Activated CD8-positive, alpha-beta T cell treated with anti-CD3 and anti-CD28 coated beads for 36 hours (primary cell): ENCODE measurements at regions of chr1 and their contacts with region 1.

Region 1: GRCh38 chr1:11907275-11908094 is 18.7 kb downstream of the KIAA2013 start:
- DNase-seq: peak; percentile 94
- ATAC-seq: peak; percentile 65
- H3K4me3 Mint-ChIP-seq: peak overlapping the region; percentile 90
- H3K27ac Mint-ChIP-seq: peak overlapping the region; percentile 96
- H3K4me1 Mint-ChIP-seq: peaks cover 29% of the 10 kb centered on the region
- H3K27me3 Mint-ChIP-seq: peaks cover 14% of the 10 kb centered on the region
- CTCF ChIP-seq: peak; percentile 65

Region 2: DNA sequence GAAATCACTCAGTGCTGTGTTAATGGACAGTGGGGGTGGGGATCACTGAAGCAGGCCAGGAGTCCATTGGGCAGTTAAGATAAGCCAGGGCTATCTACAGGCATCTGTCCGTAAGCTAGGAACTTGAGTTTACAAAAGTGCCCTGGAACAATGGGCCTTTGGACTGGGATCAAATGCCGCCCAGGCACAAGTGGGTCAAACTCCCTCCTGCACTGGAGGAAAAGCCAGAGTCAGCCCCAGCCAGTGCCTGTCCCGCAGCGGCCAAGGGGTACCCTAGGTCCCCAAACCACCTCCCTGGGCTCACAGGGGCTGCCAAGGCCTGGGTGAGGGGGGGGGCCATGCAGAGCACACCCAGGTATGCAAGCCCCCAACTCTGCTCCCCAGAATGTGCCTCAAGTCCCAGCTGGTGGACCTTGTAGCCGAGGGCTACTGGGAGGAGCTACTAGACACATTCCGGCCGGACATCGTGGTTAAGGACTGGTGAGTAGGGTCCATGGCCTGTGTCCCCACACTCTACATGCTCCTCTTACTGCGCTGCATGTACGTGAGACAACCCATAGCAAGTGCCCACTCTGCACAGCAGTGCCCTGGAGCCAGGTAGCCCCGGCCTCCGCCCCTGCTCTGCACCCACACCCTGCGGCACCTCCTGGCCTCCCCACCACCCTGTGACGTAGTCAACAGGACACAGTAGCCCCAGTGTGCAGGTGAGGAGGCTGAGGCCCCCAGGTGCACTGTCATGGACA is 235.8 kb before region 1 on chr1:
- CTCF ChIA-PET with region 1: no interaction called
- POLR2A ChIA-PET with region 1: interaction called, 32 read pairs
- intact Hi-C with region 1: no loop called
- DNase-seq: no peak
- ATAC-seq: no peak
- H3K4me3 Mint-ChIP-seq: no peak overlapping the region
- H3K27ac Mint-ChIP-seq: no peak overlapping the region
- H3K4me1 Mint-ChIP-seq: no peaks in the 10 kb centered on the region
- H3K27me3 Mint-ChIP-seq: no peaks in the 10 kb centered on the region
- CTCF ChIP-seq: no peak

Region 3: GRCh38 chr1:11805447-11806306 is 101.8 kb before region 1 on chr1 and contains the starts of genes CLCN6 and MTHFR:
- CTCF ChIA-PET with region 1: interaction called, 5 read pairs
- POLR2A ChIA-PET with region 1: interaction called, 123 read pairs
- intact Hi-C with region 1: no loop called
- DNase-seq: peak; percentile 99
- ATAC-seq: peak; percentile 88
- H3K4me3 Mint-ChIP-seq: peak within 1 kb of the TSS; percentile 90
- H3K27ac Mint-ChIP-seq: peak within 1 kb of the TSS; percentile 89
- H3K4me1 Mint-ChIP-seq: peaks cover 55% of the 10 kb centered on the region
- H3K27me3 Mint-ChIP-seq: no peaks in the 10 kb centered on the region
- CTCF ChIP-seq: no peak
- total RNA-seq, gene CLCN6: 10.8 to 12.2 TPM
- total RNA-seq, gene MTHFR: 9.6 TPM

Region 4: GRCh38 chr1:11868331-11868955 is 39.0 kb before region 1 on chr1:
- CTCF ChIA-PET with region 1: no interaction called
- POLR2A ChIA-PET with region 1: interaction called, 13 read pairs
- intact Hi-C with region 1: no loop called
- DNase-seq: no peak
- ATAC-seq: no peak
- H3K4me3 Mint-ChIP-seq: no peak overlapping the region
- H3K27ac Mint-ChIP-seq: no peak overlapping the region
- H3K4me1 Mint-ChIP-seq: no peaks in the 10 kb centered on the region
- H3K27me3 Mint-ChIP-seq: peaks cover 8% of the 10 kb centered on the region
- CTCF ChIP-seq: no peak

Region 5: GRCh38 chr1:11967028-11967547 is 59.6 kb after region 1 on chr1:
- CTCF ChIA-PET with region 1: interaction called, 3 read pairs
- POLR2A ChIA-PET with region 1: interaction called, 16 read pairs
- intact Hi-C with region 1: no loop called
- DNase-seq: peak; percentile 16
- ATAC-seq: peak; percentile 39
- H3K4me3 Mint-ChIP-seq: no peak overlapping the region
- H3K27ac Mint-ChIP-seq: no peak overlapping the region
- H3K4me1 Mint-ChIP-seq: no peaks in the 10 kb centered on the region
- H3K27me3 Mint-ChIP-seq: no peaks in the 10 kb centered on the region
- CTCF ChIP-seq: no peak

Region 6: DNA sequence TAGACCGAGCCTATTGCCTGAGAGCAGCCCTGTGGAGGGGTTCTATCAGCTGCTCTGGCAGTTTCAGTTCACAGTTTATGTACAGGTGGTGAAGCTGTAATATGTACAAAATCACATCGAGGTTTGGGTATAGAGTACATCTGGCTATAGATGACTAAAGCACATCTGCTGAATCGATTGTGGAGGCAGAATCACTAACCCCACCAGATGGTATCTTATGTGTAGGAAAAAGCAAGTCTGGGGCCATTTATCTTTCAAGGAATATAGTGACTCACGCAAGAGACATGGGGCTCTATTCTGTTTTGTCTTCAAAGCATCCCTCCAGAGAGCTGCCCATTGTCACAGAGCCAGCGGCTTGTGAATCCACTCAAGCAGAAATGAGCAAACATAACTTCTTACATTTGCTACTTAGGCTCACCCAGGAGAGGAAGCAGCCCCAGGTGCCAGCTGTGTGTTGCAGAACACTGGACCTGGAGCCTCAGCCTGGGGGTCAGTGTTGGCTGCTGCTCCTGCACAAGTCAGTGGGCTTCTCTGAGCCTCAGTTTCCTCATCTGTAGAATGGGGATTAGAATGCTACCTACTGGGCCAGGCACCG is 133.1 kb after region 1 on chr1:
- CTCF ChIA-PET with region 1: no interaction called
- POLR2A ChIA-PET with region 1: interaction called, 72 read pairs
- intact Hi-C with region 1: no loop called
- DNase-seq: peak; percentile 35
- ATAC-seq: peak; percentile 81
- H3K4me3 Mint-ChIP-seq: no peak overlapping the region
- H3K27ac Mint-ChIP-seq: no peak overlapping the region
- H3K4me1 Mint-ChIP-seq: peaks cover 12% of the 10 kb centered on the region
- H3K27me3 Mint-ChIP-seq: peaks cover 12% of the 10 kb centered on the region
- CTCF ChIP-seq: no peak

Region 7: DNA sequence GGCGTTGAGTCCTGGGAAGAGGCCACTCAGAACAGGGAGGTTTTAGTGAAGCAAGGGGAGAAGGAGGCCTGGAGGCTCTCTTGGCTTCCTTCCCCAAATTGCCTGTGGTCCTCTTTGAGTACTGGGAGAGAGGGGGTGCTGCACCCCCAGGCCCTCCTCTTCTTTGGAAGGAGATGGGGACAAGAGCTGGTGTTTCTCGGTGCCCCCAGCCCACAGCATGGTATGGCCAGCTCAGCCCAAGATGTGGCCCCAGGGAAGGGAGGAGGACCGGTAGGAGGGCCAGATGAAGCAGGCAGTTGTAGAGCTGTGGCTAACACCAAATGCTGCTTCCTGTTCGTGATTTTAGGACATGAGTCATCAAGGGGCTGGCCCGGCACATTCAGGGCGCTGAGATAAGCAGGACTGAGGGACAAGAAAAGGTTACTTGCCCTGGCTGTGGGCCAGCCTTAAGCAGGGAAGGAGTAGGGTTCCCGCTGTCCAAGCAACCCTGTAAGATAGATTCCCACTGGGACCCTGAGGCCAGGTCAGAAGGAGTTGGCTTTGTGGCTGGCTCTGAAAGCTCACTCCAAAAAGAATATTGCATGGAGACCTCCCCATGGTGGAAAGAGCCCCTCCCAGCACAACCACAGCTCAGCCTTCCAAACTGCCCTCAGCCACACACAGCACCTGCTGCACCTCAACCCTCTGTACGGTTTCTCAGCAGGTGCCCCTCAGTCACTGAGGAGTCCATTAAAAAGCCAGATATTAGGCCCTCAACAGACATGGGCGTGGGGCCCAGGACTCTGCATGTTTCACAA is 254.4 kb after region 1 on chr1:
- CTCF ChIA-PET with region 1: no interaction called
- POLR2A ChIA-PET with region 1: interaction called, 10 read pairs
- intact Hi-C with region 1: no loop called
- DNase-seq: peak; percentile 93
- ATAC-seq: peak; percentile 78
- H3K4me3 Mint-ChIP-seq: peak overlapping the region; percentile 11
- H3K27ac Mint-ChIP-seq: peak overlapping the region; percentile 95
- H3K4me1 Mint-ChIP-seq: peaks cover 79% of the 10 kb centered on the region
- H3K27me3 Mint-ChIP-seq: no peaks in the 10 kb centered on the region
- CTCF ChIP-seq: no peak